HCT116 (cell line): ENCODE measurements at regions of chr3 and their contacts with region 1.

Region 1: GRCh38 chr3:50611464-50612233 is at the start of gene CISH:
- DNase-seq: no peak
- ATAC-seq: peak; percentile 79
- H3K4me3 ChIP-seq: peak within 1 kb of the TSS; percentile 54 to 64
- H3K27ac ChIP-seq: peak within 1 kb of the TSS; percentile 62
- H3K4me1 ChIP-seq: peaks cover 14 to 37% of the 10 kb centered on the region in 2 experiments
- H3K27me3 ChIP-seq: no peaks in the 10 kb centered on the region
- CTCF ChIP-seq: peak in 2 of 3 experiments; percentile 44 to 56; a peak in 4 of 6 replicates
- POLR2A ChIP-seq: peak; percentile 31
- RAD21 ChIP-seq: no peak
- total RNA-seq, gene CISH: 4.5 TPM

Region 2: DNA sequence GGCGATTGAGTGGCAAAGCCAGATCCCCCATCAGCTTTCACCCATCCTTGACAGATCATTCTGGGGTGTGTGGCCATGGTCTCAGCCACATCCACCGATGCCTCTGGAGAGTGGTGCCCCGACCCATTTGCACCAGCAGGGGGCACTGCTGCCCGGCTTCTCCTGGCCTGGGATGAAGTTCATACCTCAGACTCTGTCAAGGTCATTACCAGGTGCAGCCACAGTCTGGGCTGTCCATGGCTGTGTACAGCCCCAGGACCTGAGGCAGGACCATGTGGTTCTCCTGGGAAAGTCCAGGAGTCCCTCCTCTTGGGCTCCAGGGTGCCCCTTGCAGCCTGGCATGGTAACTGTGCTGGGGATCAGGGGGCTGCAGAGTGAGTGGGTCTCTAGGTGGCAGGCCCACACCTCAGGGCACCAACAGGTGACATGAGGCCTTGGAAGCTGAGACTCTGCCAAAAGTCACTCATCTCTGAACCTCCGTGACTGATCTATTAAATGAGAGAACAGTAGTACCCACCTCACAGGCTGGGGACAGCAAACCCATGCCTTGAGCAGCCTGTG is 175.5 kb before region 1 on chr3:
- CTCF ChIA-PET with region 1: interaction called, 3 read pairs
- POLR2A ChIA-PET with region 1: no interaction called
- RAD21 ChIA-PET with region 1: no interaction called
- intact Hi-C with region 1: loop called (anchors 1 kb)
- DNase-seq: peak; percentile 19
- ATAC-seq: peak; percentile 98
- H3K4me3 ChIP-seq: no peak overlapping the region
- H3K27ac ChIP-seq: no peak overlapping the region
- H3K4me1 ChIP-seq: no peaks in the 10 kb centered on the region
- H3K27me3 ChIP-seq: no peaks in the 10 kb centered on the region
- CTCF ChIP-seq: peak; percentile 80 to 97 (median 94)
- POLR2A ChIP-seq: no peak
- RAD21 ChIP-seq: peak; percentile 79

Region 3: GRCh38 chr3:50568947-50569749 is 42.5 kb before region 1 on chr3 and contains the start of gene HEMK1:
- CTCF ChIA-PET with region 1: interaction called, 31 read pairs
- POLR2A ChIA-PET with region 1: interaction called, 19 read pairs
- RAD21 ChIA-PET with region 1: interaction called, 5 to 7 read pairs
- intact Hi-C with region 1: loop called (anchors 1 kb)
- DNase-seq: peak; percentile 94
- ATAC-seq: peak; percentile 79
- H3K4me3 ChIP-seq: peak within 1 kb of the TSS; percentile 90 to 99
- H3K27ac ChIP-seq: peak within 1 kb of the TSS; percentile 54
- H3K4me1 ChIP-seq: peaks cover 15 to 40% of the 10 kb centered on the region in 2 experiments
- H3K27me3 ChIP-seq: no peaks in the 10 kb centered on the region
- CTCF ChIP-seq: no peak
- POLR2A ChIP-seq: no peak
- RAD21 ChIP-seq: no peak
- total RNA-seq, gene HEMK1: 20.5 TPM

Region 4: GRCh38 chr3:50652709-50653108 is 41.1 kb after region 1 on chr3:
- CTCF ChIA-PET with region 1: interaction called, 83 read pairs
- POLR2A ChIA-PET with region 1: interaction called, 5 read pairs
- RAD21 ChIA-PET with region 1: interaction called, 21 to 40 read pairs
- intact Hi-C with region 1: loop called (anchors 1 kb)
- DNase-seq: no peak
- ATAC-seq: peak; percentile 81
- H3K4me3 ChIP-seq: no peak overlapping the region
- H3K27ac ChIP-seq: no peak overlapping the region
- H3K4me1 ChIP-seq: peaks cover 5 to 23% of the 10 kb centered on the region in 2 experiments
- H3K27me3 ChIP-seq: no peaks in the 10 kb centered on the region
- CTCF ChIP-seq: peak; percentile 64 to 75 (median 65)
- POLR2A ChIP-seq: no peak
- RAD21 ChIP-seq: peak; percentile 92

Region 5: GRCh38 chr3:51099794-51100535 is 488.3 kb after region 1 on chr3:
- CTCF ChIA-PET with region 1: interaction called, 6 read pairs
- POLR2A ChIA-PET with region 1: no interaction called
- RAD21 ChIA-PET with region 1: no interaction called
- intact Hi-C with region 1: loop called (anchors 2 kb)
- DNase-seq: peak; percentile 41
- ATAC-seq: peak; percentile 98
- H3K4me3 ChIP-seq: no peak overlapping the region
- H3K27ac ChIP-seq: no peak overlapping the region
- H3K4me1 ChIP-seq: no peaks in the 10 kb centered on the region
- H3K27me3 ChIP-seq: no peaks in the 10 kb centered on the region
- CTCF ChIP-seq: peak; percentile 74 to 90 (median 84)
- POLR2A ChIP-seq: no peak
- RAD21 ChIP-seq: peak; percentile 66

Region 6: DNA sequence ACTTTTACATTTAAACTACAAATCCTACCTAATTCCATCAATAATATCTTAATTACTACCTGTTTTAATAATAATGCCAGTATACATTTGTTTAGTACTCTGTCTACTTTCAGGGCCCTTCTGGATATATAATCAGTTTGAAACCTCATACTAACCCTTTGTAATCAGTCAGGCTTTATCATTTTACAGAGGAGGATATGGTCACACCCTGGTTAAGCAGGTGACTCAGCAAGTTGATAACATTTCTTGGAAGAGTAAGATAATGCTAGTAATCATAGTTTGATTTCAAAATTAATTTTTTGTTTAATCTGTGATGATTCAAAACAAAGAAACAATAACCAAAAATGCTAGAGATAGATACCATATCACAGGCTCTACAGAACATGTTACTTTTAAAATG is 565.3 kb after region 1 on chr3:
- CTCF ChIA-PET with region 1: no interaction called
- POLR2A ChIA-PET with region 1: no interaction called
- RAD21 ChIA-PET with region 1: no interaction called
- intact Hi-C with region 1: no loop called
- DNase-seq: no peak
- ATAC-seq: no peak
- H3K4me3 ChIP-seq: no peak overlapping the region
- H3K27ac ChIP-seq: no peak overlapping the region
- H3K4me1 ChIP-seq: peaks cover 0 to 6% of the 10 kb centered on the region in 2 experiments; a peak in 2 of 4 replicates
- H3K27me3 ChIP-seq: no peaks in the 10 kb centered on the region
- CTCF ChIP-seq: no peak
- POLR2A ChIP-seq: no peak
- RAD21 ChIP-seq: no peak

Region 7: DNA sequence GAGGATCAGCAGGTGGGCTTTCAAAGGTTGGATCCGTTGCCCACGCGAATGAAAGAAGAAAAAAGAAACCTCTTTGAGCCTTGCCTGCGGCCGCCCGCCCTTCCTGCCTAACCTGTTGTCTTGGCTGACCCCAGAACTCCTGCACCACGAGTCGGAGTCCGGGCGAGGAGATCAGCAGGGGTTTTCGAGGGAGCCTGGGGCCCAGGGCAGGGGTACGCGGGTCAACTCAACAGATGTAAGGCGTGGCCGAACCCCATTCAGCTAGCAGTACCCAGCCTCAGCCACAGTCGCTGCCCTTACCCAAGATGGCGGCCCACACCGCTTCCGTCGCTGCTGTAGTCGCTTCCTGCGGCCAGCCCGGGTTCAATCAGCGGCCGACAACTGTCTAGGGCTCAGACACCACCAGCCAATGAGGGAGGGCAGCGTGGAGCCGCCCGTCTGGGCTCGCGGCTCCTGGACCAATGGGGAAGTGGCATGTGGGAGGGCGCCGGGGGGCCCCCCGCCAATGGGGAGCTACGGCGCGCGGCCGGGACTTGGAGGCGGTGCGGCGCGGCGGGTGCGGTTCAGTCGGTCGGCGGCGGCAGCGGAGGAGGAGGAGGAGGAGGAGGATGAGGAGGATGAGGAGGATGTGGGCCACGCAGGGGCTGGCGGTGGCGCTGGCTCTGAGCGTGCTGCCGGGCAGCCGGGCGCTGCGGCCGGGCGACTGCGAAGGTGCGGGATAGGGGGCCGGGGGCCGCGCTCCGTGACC is 773.3 kb after region 1 on chr3 and contains the start of gene MANF:
- CTCF ChIA-PET with region 1: interaction called, 10 read pairs
- POLR2A ChIA-PET with region 1: interaction called, 5 read pairs
- RAD21 ChIA-PET with region 1: interaction called in 1 of 2 experiments, 3 read pairs
- intact Hi-C with region 1: loop called (anchors 2 kb)
- DNase-seq: peak; percentile 95
- ATAC-seq: peak; percentile 93
- H3K4me3 ChIP-seq: peak within 1 kb of the TSS; percentile 97 to 99
- H3K27ac ChIP-seq: peak within 1 kb of the TSS; percentile 86
- H3K4me1 ChIP-seq: peaks cover 15 to 39% of the 10 kb centered on the region in 2 experiments; a peak in 3 of 4 replicates
- H3K27me3 ChIP-seq: no peaks in the 10 kb centered on the region
- CTCF ChIP-seq: no peak
- POLR2A ChIP-seq: peak; percentile 39
- RAD21 ChIP-seq: no peak
- total RNA-seq, gene MANF: 132 TPM

Region 8: DNA sequence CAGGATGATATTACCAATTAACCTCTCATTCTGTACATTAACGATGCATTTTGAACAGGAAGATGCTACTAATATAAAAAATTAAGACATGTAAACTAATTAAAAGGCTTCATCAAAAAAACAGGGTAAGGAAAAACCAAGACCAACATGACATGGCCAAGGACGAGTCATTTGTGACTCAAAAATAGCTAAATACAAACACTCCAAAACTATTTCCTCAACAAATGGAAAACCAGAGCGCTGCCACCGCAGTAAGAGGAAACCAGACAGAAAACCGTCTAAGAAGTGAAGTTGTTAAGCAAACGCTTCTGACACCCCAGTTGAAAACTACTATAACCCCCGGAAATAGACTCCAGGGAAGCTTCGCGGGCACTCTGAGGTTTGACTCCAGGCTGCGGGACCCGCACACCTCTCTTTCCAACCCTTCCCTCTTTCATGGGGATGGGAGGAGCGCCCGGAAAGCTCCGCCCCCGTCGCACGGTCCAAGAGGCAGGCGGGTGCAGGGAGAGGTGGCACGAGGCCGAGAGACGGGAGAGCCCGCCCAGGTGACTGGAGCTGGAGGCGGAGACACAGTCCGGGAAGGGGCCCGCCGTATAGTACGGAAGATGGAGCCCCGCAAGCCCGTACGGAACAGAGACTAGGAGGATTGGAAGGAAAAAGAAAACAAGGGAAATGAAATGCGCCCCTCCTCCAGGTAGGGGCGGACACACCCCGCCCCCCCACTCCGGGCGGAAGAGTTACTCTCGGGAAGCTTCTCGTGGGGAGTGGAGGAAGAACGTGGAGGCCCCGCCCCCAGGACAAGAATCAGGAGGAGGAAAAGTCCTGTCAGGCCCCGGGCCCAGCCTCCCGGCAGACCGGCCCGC is 887.5 kb after region 1 on chr3:
- CTCF ChIA-PET with region 1: interaction called, 9 read pairs
- POLR2A ChIA-PET with region 1: no interaction called
- RAD21 ChIA-PET with region 1: interaction called in 1 of 2 experiments, 3 read pairs
- intact Hi-C with region 1: loop called (anchors 5 kb)
- DNase-seq: peak; percentile 84
- ATAC-seq: peak; percentile 81
- H3K4me3 ChIP-seq: peak overlapping the region; percentile 62 to 72
- H3K27ac ChIP-seq: peak overlapping the region; percentile 89
- H3K4me1 ChIP-seq: peaks cover 10 to 17% of the 10 kb centered on the region in 2 experiments; a peak in 3 of 4 replicates
- H3K27me3 ChIP-seq: no peaks in the 10 kb centered on the region
- CTCF ChIP-seq: no peak
- POLR2A ChIP-seq: peak; percentile 9
- RAD21 ChIP-seq: no peak